Endothelial cell of umbilical vein (primary cell): ENCODE measurements at regions of chr19 and their contacts with region 1.

Region 1: GRCh38 chr19:3692141-3693024 is 7.9 kb downstream of the PIP5K1C start:
- DNase-seq: no peak
- H3K4me3 ChIP-seq: no peak overlapping the region
- H3K27ac ChIP-seq: no peak overlapping the region
- H3K4me1 ChIP-seq: no peaks in the 10 kb centered on the region
- H3K27me3 ChIP-seq: no peaks in the 10 kb centered on the region
- CTCF ChIP-seq: peak; percentile 57 to 74
- POLR2A ChIP-seq: no peak

Region 2: DNA sequence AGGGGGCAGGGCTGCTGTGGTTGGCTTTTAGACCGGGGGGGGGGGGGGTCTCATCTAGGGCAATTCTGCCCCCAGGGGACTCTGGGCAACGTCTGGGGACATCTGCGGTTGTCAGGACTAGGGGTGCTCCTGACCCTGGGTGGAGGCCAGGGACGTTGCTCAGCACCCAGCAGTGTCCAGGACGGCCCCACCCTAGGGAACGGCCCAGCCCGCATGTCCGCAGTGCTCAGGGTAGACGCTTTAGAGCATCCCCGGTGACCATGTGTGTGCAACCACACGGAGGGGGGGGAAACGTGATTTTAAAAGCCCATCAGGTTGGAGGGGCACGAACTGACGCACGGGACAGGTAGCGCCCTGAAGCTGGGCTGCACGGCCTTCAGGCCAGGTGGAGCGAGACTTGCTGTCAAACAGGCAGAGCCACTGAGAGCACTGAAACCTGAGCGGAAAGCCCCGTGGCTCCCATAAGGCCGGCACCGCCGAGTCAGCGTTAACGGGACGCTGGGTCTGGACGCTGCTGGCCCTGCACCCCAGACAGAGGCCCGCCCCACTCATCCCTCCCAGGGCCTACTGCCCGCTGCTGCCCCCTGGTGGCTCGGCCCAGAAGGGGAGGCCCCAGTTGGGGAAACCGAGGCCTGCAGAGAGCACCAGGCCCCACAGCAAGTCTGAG is 74.1 kb before region 1 on chr19:
- CTCF ChIA-PET with region 1: no interaction called
- POLR2A ChIA-PET with region 1: no interaction called
- dilution Hi-C with region 1: no loop called
- intact Hi-C with region 1: no loop called
- DNase-seq: peak; percentile 38
- H3K4me3 ChIP-seq: no peak overlapping the region
- H3K27ac ChIP-seq: no peak overlapping the region
- H3K4me1 ChIP-seq: no peaks in the 10 kb centered on the region
- H3K27me3 ChIP-seq: no peaks in the 10 kb centered on the region
- CTCF ChIP-seq: peak; percentile 85 to 97
- POLR2A ChIP-seq: no peak

Region 3: GRCh38 chr19:3665681-3666544 is 26.5 kb before region 1 on chr19:
- CTCF ChIA-PET with region 1: interaction called, 25 read pairs
- POLR2A ChIA-PET with region 1: interaction called, 6 read pairs
- dilution Hi-C with region 1: no loop called
- intact Hi-C with region 1: no loop called
- DNase-seq: peak; percentile 46
- H3K4me3 ChIP-seq: no peak overlapping the region
- H3K27ac ChIP-seq: no peak overlapping the region
- H3K4me1 ChIP-seq: peaks cover 10% of the 10 kb centered on the region
- H3K27me3 ChIP-seq: no peaks in the 10 kb centered on the region
- CTCF ChIP-seq: peak; percentile 66 to 90
- POLR2A ChIP-seq: no peak

Region 4: DNA sequence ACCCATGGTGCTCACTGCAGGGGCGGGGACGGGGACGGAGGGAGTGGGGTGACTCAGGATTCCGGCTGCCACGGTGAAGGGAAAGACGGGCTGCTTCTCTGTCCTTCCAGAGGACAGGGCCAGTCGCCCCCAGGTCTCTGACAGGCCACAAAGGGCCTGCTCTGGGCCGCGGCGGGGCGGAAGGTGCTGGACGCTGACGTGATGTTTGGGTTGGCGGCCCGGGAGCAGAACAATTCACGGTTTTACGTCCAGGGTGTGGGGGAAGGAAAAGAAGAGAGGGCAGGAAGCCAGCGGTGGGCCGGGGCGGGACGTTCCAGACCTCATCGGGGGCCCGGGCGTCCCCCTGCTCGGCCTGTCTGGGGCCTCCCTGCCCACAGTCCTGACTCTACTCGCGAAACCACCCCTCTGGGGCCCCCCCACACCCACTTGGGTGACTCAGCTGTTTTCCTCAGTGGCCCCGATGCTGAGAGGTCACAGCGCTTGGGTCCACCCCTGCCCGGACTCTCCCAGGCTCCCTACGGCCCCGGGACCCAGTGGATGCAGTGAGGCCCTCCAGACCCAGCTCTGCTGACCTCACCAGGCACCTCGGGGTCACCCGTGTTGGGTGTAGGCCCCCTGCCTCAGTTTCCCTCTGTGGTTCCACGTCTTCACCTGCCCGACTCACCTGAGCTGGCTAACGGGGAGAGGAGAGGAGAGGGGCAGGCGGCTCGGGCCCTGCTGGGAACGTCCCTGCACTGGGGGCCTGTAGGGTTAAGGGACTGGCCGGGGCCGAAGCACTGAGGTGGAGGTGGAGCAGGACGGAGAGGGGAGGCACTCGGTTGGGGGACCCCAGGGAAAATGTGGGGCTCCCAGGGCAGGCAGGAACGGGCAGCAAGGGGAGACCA is 21.3 kb before region 1 on chr19:
- CTCF ChIA-PET with region 1: interaction called, 25 read pairs
- POLR2A ChIA-PET with region 1: interaction called, 6 read pairs
- dilution Hi-C with region 1: no loop called
- intact Hi-C with region 1: no loop called
- DNase-seq: peak; percentile 84
- H3K4me3 ChIP-seq: peak overlapping the region in 2 of 3 experiments; percentile 4 to 15
- H3K27ac ChIP-seq: peak overlapping the region; percentile 98
- H3K4me1 ChIP-seq: peaks cover 28% of the 10 kb centered on the region
- H3K27me3 ChIP-seq: no peaks in the 10 kb centered on the region
- CTCF ChIP-seq: no peak
- POLR2A ChIP-seq: peak; percentile 45